CD14-positive monocyte (primary cell): ENCODE measurements at regions of chr2 and their contacts with region 1.

Region 1: GRCh38 chr2:70173520-70173919 is 17.3 kb downstream of the C2orf42 start:
- DNase-seq: no peak
- H3K4me3 ChIP-seq: no peak overlapping the region
- H3K4me3 Mint-ChIP-seq: no peak overlapping the region
- H3K27ac ChIP-seq: no peak overlapping the region
- H3K27ac Mint-ChIP-seq: peak overlapping the region in 1 of 7 donors; percentile 22
- H3K4me1 ChIP-seq: no peaks in the 10 kb centered on the region
- H3K4me1 Mint-ChIP-seq: no peaks in the 10 kb centered on the region
- H3K27me3 ChIP-seq: no peaks in the 10 kb centered on the region
- H3K27me3 Mint-ChIP-seq: peaks cover 0 to 1% (median 1%) of the 10 kb centered on the region in 3 donors
- CTCF ChIP-seq: no peak

Region 2: GRCh38 chr2:70226781-70227180 is 53.3 kb after region 1 on chr2:
- intact Hi-C with region 1: loop called in 1 of 2 experiments (anchors 10 kb)
- DNase-seq: no peak
- H3K4me3 ChIP-seq: no peak overlapping the region
- H3K4me3 Mint-ChIP-seq: no peak overlapping the region
- H3K27ac ChIP-seq: no peak overlapping the region
- H3K27ac Mint-ChIP-seq: peak overlapping the region in 1 of 7 donors; percentile 37
- H3K4me1 ChIP-seq: no peaks in the 10 kb centered on the region
- H3K4me1 Mint-ChIP-seq: no peaks in the 10 kb centered on the region
- H3K27me3 ChIP-seq: no peaks in the 10 kb centered on the region
- H3K27me3 Mint-ChIP-seq: no peaks in the 10 kb centered on the region
- CTCF ChIP-seq: no peak

Region 3: GRCh38 chr2:70283500-70284191 is 110.1 kb after region 1 on chr2:
- intact Hi-C with region 1: no loop called
- DNase-seq: no peak
- H3K4me3 ChIP-seq: no peak overlapping the region
- H3K4me3 Mint-ChIP-seq: no peak overlapping the region
- H3K27ac ChIP-seq: no peak overlapping the region
- H3K27ac Mint-ChIP-seq: peak overlapping the region in 3 of 7 donors; percentile 48 to 58 (median 53)
- H3K4me1 ChIP-seq: no peaks in the 10 kb centered on the region
- H3K4me1 Mint-ChIP-seq: no peaks in the 10 kb centered on the region
- H3K27me3 ChIP-seq: no peaks in the 10 kb centered on the region
- H3K27me3 Mint-ChIP-seq: peaks cover 0 to 1% (median 0%) of the 10 kb centered on the region in 3 donors
- CTCF ChIP-seq: no peak